Mammary epithelial cell (primary cell): ENCODE measurements at regions of chr1 and their contacts with region 1.

Region 1: GRCh38 chr1:50368179-50369012 is 54.8 kb downstream of the DMRTA2 start:
- DNase-seq: peak; percentile 21
- H3K4me3 ChIP-seq: peak overlapping the region in 1 of 3 experiments; percentile 26
- H3K27ac ChIP-seq: no peak overlapping the region
- H3K4me1 ChIP-seq: no peaks in the 10 kb centered on the region
- H3K27me3 ChIP-seq: no peaks in the 10 kb centered on the region
- CTCF ChIP-seq: peak; percentile 46 to 72

Region 2: GRCh38 chr1:50605186-50605875 is 236.9 kb after region 1 on chr1:
- CTCF ChIA-PET with region 1: interaction called, 7 read pairs
- dilution Hi-C with region 1: no loop called
- in situ Hi-C with region 1: loop called (anchors 5 to 10 kb)
- intact Hi-C with region 1: loop called (anchors 1 kb)
- DNase-seq: peak; percentile 46
- H3K4me3 ChIP-seq: no peak overlapping the region
- H3K27ac ChIP-seq: no peak overlapping the region
- H3K4me1 ChIP-seq: peaks cover 27% of the 10 kb centered on the region
- H3K27me3 ChIP-seq: no peaks in the 10 kb centered on the region
- CTCF ChIP-seq: peak; percentile 76 to 77

Region 3: DNA sequence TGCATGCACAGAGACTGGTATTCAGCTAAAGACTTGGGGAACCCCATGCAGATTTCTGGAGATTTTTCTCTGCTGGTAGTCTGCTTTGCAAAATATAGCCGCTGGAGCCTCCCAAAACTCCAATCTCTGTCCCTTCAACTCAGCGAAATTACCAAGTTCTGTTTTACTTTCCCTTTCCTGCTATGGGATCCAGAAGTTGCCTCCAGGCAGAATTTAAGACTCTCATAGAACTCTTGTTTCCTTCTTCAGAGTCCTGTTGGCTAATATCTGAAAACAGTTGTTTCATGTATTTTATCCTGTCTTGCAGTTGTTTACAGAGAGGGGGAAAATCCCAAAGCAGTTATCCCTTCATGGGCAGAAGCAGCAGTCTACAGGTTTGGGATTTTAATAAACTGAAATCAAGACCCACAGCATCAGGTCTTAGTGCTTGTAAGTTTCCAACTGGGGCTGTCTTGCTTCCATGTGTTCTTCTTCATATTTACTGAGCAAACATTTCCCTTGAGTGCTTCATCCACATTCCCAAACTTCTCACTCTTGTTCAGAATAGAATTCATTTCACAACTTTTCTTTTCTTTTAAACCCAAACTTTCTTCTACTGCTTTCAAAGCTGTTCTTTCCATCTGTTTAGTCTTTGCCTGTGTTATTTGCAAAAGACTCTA is 276.2 kb after region 1 on chr1:
- CTCF ChIA-PET with region 1: no interaction called
- dilution Hi-C with region 1: no loop called
- in situ Hi-C with region 1: no loop called
- intact Hi-C with region 1: no loop called
- DNase-seq: no peak
- H3K4me3 ChIP-seq: no peak overlapping the region
- H3K27ac ChIP-seq: no peak overlapping the region
- H3K4me1 ChIP-seq: no peaks in the 10 kb centered on the region
- H3K27me3 ChIP-seq: no peaks in the 10 kb centered on the region
- CTCF ChIP-seq: no peak

Region 4: GRCh38 chr1:50704126-50704525 is 335.7 kb after region 1 on chr1:
- CTCF ChIA-PET with region 1: no interaction called
- dilution Hi-C with region 1: no loop called
- in situ Hi-C with region 1: no loop called
- intact Hi-C with region 1: loop called (anchors 1 kb)
- DNase-seq: peak; percentile 26
- H3K4me3 ChIP-seq: no peak overlapping the region
- H3K27ac ChIP-seq: no peak overlapping the region
- H3K4me1 ChIP-seq: peaks cover 15% of the 10 kb centered on the region
- H3K27me3 ChIP-seq: no peaks in the 10 kb centered on the region
- CTCF ChIP-seq: peak; percentile 74 to 80

Region 5: DNA sequence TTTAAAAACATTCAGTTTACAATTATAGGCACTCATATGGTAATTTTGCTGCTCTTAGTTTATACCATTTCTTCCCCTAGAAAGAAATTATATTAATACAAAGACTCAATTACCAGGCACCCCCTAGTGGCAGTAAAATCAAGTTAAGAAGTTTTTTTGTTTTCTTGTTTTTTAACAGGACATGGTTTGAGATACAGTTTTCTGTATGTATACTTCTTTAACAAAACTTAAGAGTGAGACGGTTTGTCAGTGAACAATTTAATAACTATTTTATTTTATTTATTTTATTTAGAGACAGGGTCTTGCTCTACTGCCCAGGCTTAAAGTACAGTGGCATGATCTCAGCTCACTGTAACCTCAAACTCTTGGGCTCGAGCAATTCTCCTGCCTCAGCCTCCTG is 367.0 kb after region 1 on chr1:
- CTCF ChIA-PET with region 1: no interaction called
- dilution Hi-C with region 1: no loop called
- in situ Hi-C with region 1: no loop called
- intact Hi-C with region 1: loop called (anchors 2 kb)
- DNase-seq: no peak
- H3K4me3 ChIP-seq: no peak overlapping the region
- H3K27ac ChIP-seq: no peak overlapping the region
- H3K4me1 ChIP-seq: no peaks in the 10 kb centered on the region
- H3K27me3 ChIP-seq: no peaks in the 10 kb centered on the region
- CTCF ChIP-seq: peak; percentile 49

Region 6: DNA sequence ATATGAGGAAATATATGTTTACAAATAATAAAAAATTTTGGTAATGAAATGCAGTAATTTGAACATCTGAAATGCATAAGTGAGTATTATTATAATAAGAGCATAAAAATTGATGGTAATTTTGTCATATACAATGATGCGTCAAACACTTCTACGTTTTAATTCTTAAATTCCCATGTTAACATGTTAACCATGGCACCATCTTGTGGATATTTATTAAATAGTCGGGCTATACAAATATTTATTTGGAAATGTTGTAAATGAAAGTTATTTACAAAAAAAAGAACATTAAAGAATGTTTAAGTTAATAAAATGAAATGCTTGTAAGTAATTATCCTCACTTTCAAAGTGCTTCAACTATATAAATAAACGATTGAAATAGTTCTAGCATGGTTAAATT is 676.4 kb after region 1 on chr1:
- CTCF ChIA-PET with region 1: no interaction called
- dilution Hi-C with region 1: no loop called
- in situ Hi-C with region 1: loop called in 1 of 2 experiments (anchors 25 kb)
- intact Hi-C with region 1: no loop called
- DNase-seq: no peak
- H3K4me3 ChIP-seq: no peak overlapping the region
- H3K27ac ChIP-seq: no peak overlapping the region
- H3K4me1 ChIP-seq: no peaks in the 10 kb centered on the region
- H3K27me3 ChIP-seq: no peaks in the 10 kb centered on the region
- CTCF ChIP-seq: peak in 1 of 2 donors; percentile 34

Region 7: DNA sequence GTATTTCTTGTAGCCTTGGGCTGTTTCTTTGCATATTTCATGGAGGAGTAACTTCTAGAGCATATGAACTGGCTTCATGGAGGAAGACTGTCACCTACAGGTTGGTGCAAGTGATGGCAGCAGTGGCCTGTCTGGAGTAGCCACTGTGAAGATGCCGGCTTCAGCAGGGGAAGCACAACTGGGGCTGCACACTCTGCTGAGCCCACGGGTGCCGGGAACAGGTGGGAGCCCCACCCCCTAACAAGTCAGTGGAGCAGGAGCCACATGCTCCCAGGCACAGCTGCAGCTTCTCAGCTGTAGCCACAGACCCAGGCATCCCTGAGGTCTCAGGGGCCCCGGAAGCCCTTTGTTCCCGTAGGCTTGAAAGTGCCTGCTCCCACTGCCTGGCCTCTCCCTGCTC is 690.5 kb after region 1 on chr1:
- CTCF ChIA-PET with region 1: no interaction called
- dilution Hi-C with region 1: no loop called
- in situ Hi-C with region 1: no loop called
- intact Hi-C with region 1: loop called (anchors 5 kb)
- DNase-seq: peak; percentile 10
- H3K4me3 ChIP-seq: no peak overlapping the region
- H3K27ac ChIP-seq: no peak overlapping the region
- H3K4me1 ChIP-seq: peaks cover 30% of the 10 kb centered on the region
- H3K27me3 ChIP-seq: no peaks in the 10 kb centered on the region
- CTCF ChIP-seq: peak; percentile 50 to 61

Region 8: DNA sequence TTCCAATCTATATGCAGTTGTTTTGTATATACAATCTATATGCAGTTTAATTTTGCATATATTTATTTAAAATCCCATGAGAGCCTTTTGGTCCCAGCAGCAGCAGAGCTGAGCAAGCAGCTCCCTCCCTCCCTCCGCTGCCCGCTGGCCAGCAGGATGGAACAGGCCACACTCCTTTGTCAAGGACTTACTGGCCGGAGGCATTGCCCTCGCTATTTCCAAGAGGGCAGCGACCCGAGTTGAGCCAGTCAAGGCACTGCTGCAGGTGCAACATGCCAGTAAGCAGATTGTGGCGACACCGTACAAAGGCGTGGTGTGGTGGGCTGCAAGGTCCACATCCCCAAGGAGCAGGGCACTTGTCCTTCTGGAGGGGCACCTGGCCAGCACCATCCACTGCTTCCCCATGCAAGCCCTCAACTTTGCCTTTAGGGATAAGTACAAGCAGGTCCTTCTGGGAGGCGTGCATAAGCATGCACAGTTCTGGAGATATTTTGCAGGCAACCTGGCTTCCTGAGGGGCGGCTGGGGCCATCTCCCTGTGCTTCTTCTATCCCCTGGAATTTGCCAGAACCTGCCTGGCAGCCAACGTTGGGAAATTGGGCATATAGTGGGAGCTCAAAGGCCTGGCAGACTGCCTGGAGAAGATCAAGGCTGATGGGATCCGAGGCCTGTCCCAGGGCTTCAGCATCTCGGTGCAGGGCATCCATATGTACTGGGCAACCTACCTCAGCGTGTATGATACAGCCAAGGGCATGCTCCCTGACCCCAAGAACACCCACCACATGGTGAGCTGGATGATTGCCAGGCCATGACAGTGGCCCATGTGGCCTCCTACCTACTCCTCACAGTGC is 1340.7 kb after region 1 on chr1:
- CTCF ChIA-PET with region 1: no interaction called
- dilution Hi-C with region 1: no loop called
- in situ Hi-C with region 1: no loop called
- intact Hi-C with region 1: no loop called
- DNase-seq: no peak
- H3K4me3 ChIP-seq: no peak overlapping the region
- H3K27ac ChIP-seq: no peak overlapping the region
- H3K4me1 ChIP-seq: no peaks in the 10 kb centered on the region
- H3K27me3 ChIP-seq: no peaks in the 10 kb centered on the region
- CTCF ChIP-seq: no peak